Activated T-helper 2 cell treated with anti-CD3 and anti-CD28 coated beads, Interferon-gamma antibody, Interleukin-2, Interleukin-4, amounts not matched to agents 10 μg/mL and 5 μg/mL and 100 μg/mL, durations not matched to agents 14 hours and 24 hours and 36 hours (primary cell): ENCODE measurements at regions of chr6 and their contacts with region 1.

Region 1: GRCh38 chr6:38570750-38571149 is 69.0 kb downstream of the BTBD9 start:
- DNase-seq: no peak
- H3K4me3 Mint-ChIP-seq: no peak overlapping the region
- H3K27ac Mint-ChIP-seq: no peak overlapping the region
- H3K4me1 Mint-ChIP-seq: peaks cover 24% of the 10 kb centered on the region
- H3K27me3 Mint-ChIP-seq: no peaks in the 10 kb centered on the region

Region 2: DNA sequence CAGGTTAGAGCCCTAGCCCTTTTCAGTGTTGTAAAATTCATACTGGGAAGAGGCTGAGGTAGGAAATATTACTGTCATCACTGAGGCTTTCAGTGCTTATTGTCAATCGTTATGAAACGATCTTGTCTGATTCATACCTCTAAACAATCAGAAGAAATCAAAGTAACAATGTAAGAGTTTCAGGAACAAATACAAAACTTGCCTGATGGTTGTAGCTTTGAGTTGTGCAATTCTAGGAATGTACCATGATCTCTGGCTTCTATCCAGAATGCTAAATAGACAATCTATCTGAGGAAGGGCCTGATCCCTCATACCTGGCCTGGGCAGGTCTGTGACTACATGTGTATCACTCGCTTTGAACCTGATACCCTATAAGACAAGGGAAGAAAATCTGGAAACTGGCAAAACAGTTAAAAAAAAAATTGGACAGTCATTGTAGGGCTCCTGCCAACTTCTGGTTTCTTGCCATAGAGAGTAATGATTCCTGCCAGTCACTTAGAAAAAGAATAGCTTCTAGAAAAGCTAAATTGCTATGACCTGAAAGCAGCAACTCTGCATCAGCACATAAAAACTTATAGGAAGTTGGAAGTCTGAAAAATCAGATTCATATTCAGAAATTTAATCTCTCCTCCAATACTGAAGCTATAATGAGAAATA is 165.7 kb before region 1 on chr6:
- intact Hi-C with region 1: no loop called
- DNase-seq: no peak
- H3K4me3 Mint-ChIP-seq: no peak overlapping the region
- H3K27ac Mint-ChIP-seq: no peak overlapping the region
- H3K4me1 Mint-ChIP-seq: peaks cover 8% of the 10 kb centered on the region
- H3K27me3 Mint-ChIP-seq: no peaks in the 10 kb centered on the region

Region 3: DNA sequence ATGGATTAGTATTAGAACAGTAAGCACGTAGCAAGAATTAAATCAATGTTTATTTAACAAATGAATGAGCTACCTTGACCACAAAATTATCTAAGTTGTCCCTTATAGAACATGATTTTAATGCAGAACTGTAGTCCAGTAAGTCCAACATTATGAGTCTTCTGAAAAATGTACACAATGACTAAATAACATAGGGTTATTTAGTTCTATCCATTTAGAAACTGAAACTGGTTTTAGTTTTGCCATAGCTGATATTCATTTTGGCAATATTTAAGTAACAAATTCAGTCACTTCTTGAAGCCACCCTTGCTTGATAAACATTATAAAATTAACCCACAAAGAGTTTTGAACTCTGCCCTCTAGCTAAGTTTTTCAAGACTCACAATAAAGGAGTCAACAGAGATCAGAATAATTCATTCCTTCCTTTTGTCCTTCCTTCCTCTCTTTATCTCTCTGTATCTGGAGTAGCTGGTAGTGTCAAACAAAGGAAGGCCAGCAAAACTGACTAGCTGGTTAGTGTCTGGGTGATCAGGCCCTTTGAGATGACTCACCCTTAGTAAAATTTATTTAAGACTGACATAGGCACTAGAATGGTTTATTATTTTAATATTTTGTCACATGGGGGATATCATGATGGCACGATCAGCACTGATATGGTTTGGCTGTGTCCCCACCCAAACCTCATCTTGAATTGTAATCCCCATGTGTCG is 46.2 kb before region 1 on chr6:
- intact Hi-C with region 1: loop called (anchors 5 kb)
- DNase-seq: no peak
- H3K4me3 Mint-ChIP-seq: no peak overlapping the region
- H3K27ac Mint-ChIP-seq: no peak overlapping the region
- H3K4me1 Mint-ChIP-seq: peaks cover 9% of the 10 kb centered on the region
- H3K27me3 Mint-ChIP-seq: no peaks in the 10 kb centered on the region

Region 4: DNA sequence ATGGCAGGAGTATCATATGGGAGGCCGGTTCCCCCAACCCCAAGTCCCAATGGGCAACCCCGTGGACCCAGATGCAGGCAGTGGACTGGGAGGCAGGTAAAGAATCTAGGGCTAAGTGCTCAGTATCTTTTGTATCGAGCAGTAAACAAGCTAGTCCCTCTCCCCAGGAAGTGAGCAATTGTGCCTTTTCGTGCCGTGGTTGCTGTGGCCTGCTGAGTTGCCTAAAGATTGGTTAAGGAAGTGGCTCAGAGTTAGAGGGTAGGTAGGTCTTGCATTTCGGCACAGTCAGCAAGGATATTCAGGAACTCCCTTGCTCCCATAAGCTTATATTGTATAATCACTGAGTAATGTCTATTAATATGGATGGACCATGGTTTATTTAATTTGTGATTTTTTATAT is 143.1 kb after region 1 on chr6:
- intact Hi-C with region 1: loop called (anchors 5 kb)
- DNase-seq: peak; percentile 76
- H3K4me3 Mint-ChIP-seq: peak overlapping the region; percentile 56
- H3K27ac Mint-ChIP-seq: peak overlapping the region; percentile 87
- H3K4me1 Mint-ChIP-seq: peaks cover 44% of the 10 kb centered on the region
- H3K27me3 Mint-ChIP-seq: peaks cover 13% of the 10 kb centered on the region